ENCODE measurements at regions of chr2 and their contacts with region 1.

Region 1: GRCh38 chr2:208386541-208386940 is 20.1 kb upstream of the PTH2R start:
- H3K4me3 ChIP-seq: no peak overlapping the region
- H3K27ac ChIP-seq: no peak overlapping the region
- H3K4me1 ChIP-seq: no peaks in the 10 kb centered on the region
- CTCF ChIP-seq: no peak

Region 2: DNA sequence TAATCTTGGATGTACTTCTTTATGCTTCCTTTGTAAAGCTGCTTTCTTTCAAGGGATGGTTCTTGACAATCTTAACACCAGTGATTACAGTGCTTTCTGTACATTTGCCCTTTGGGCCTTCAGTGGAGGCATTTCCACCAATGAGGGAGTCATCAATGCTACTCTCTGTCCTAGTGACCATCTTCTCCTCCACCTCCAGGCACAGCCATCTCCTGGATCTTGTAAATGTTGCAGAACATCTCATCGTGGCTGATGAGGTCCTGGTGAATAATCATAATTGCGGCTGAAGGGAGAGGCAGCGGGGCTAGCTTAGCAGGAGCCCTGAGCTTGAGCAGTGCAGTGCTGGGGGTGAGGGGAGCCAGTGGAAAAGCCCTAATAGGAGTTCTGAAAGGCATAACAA is 164.2 kb before region 1 on chr2:
- CTCF ChIA-PET with region 1: no interaction called
- POLR2A ChIA-PET with region 1: no interaction called
- H3K4me3 ChIP-seq: no peak overlapping the region
- H3K27ac ChIP-seq: no peak overlapping the region
- H3K4me1 ChIP-seq: no peaks in the 10 kb centered on the region
- CTCF ChIP-seq: no peak

Region 3: DNA sequence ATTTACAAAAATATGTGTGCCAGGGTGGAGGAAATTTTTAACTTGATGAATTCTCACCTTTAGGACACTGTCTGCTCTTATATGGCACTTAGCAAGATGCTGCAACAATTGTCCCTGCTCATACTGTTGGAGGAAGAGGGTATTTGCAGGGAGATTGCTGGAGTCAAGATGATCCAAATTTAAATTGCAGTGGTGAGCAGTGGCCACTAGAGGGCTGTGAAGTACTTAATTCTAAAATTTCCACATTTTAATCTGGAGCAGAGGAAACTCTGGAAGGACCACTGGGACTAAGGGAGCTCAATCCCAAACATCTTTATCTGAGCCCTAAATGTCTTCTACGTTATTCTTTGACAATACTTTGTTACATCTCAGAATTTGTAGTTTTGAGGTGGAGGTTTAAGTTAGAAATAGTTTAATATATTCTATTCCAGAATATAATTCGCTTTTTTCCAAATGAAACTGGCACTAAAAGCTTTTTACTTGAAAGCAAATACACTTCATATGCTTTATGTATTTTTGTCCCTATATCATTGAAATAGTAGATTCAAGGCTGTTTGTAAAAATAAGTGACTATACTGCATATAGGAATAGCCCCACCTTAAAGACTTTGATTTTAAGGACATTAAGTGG is 13.0 kb before region 1 on chr2:
- CTCF ChIA-PET with region 1: interaction called, 17 read pairs
- POLR2A ChIA-PET with region 1: no interaction called
- H3K4me3 ChIP-seq: no peak overlapping the region
- H3K27ac ChIP-seq: no peak overlapping the region
- H3K4me1 ChIP-seq: no peaks in the 10 kb centered on the region
- CTCF ChIP-seq: peak; percentile 50; the same call in 1 of the 2 replicates

Region 4: DNA sequence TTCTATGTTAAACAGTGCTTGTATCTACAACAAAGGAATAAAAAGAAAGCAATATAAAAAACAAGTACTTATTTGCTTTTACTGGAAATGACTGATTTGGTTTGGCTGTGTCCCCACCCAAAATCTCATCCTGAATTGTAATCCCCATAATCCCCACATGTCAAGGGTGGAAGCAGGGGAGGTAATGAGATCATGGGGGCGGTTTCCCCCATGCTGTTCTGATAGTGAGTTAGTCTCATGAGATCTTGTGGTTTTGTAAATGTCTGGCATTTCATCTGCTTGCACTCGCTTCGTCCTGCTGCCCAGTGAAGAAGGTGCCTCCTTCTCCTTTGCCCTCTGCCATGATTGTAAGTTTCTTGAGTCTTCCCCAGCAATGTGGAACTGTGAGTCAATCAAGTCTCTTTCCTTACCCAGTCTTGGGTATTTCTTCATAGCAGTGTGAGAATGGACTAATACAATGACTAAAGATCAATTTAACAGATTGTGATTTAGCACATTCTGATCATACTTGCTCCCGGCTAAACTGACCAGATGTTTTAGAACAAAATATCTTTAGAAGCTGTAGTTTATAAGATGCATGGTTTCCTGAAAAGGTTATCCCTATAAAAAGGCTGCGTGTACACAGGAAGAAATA is 40.0 kb after region 1 on chr2:
- CTCF ChIA-PET with region 1: no interaction called
- POLR2A ChIA-PET with region 1: no interaction called
- H3K4me3 ChIP-seq: no peak overlapping the region
- H3K27ac ChIP-seq: no peak overlapping the region
- H3K4me1 ChIP-seq: no peaks in the 10 kb centered on the region
- CTCF ChIP-seq: no peak

Measured in HEK293 (cell line).